Activated naive CD4-positive, alpha-beta T cell treated with anti-CD3 and anti-CD28 coated beads for 36 hours (primary cell): ENCODE measurements at regions of chr16 and their contacts with region 1.

Region 1: GRCh38 chr16:23826528-23827045 is 9.2 kb upstream of the PRKCB start:
- DNase-seq: no peak
- H3K4me3 Mint-ChIP-seq: peak overlapping the region; percentile 17
- H3K27ac Mint-ChIP-seq: peak overlapping the region; percentile 70
- H3K4me1 Mint-ChIP-seq: peaks cover 21% of the 10 kb centered on the region
- H3K27me3 Mint-ChIP-seq: no peaks in the 10 kb centered on the region

Region 2: DNA sequence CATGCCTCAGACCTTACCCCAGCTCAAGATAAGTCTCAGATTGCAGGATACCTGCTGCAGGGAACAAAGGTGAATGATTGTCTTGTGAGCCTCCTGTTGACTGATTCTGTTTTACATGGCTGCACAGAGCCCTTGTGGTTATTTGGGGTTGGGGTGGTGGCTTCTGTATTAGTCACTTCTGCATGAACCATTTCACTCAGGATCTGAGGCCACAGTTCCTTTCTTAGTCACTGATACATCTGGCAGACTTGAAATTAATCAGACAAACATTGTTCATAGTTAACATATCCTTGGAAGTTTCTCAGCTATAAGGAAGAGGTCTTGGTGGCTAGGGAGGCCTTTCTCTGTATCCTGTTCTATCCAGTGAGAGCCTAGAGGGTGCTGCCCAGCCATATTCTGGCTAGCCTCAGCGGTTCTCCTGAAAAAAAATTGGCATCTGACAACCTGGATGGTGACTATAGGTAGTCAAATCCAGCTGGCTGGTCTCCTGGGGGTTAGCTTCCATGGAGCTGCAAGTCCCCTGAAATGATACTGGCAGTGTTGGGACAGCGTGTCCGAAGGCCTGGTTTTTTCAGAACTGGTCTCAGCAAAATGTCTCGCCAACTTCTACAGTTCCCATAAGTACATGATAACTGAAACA is 156.3 kb before region 1 on chr16:
- CTCF ChIA-PET with region 1: no interaction called
- intact Hi-C with region 1: loop called (anchors 1 kb)
- DNase-seq: peak; percentile 82
- H3K4me3 Mint-ChIP-seq: no peak overlapping the region
- H3K27ac Mint-ChIP-seq: peak overlapping the region; percentile 13
- H3K4me1 Mint-ChIP-seq: peaks cover 16% of the 10 kb centered on the region
- H3K27me3 Mint-ChIP-seq: no peaks in the 10 kb centered on the region

Region 3: DNA sequence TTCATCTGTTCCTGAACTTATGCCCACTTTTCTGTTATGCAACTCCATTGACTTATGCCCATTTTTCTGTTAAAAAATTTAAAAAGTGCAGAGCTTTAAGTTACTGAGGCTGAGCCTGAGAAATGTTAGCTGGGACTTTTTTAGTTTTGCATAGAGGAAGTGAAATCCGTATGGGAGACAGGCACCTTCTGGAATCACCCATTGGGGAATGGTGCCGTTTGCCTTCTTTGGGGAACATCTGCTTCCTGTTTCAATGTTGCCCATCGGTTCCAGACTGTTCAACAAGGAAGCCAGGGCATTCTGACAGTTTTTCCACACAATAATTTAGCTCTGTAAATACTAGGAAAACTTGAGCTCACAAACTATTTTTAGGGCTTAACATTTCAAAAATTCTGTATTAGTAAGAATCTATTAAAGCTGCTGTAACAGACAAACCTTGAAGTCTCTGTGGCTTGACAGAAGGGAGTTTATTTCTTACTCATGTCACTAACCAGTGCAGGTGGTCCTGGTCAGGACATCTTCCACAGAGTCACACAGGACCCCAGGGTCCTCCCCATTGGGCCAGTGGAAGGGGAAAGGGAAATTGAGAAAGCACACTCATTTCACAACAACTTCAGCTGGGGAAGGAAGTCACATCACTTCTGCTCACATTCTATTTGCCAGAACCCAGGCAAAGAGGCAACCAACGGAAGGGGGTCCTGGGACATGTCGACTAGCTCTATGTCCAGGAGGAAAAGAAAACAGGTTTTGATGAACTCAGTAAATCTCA is 26.4 kb after region 1 on chr16:
- CTCF ChIA-PET with region 1: no interaction called
- intact Hi-C with region 1: loop called (anchors 1 kb)
- DNase-seq: peak; percentile 30
- H3K4me3 Mint-ChIP-seq: no peak overlapping the region
- H3K27ac Mint-ChIP-seq: peak overlapping the region; percentile 38
- H3K4me1 Mint-ChIP-seq: peaks cover 85% of the 10 kb centered on the region
- H3K27me3 Mint-ChIP-seq: no peaks in the 10 kb centered on the region

Region 4: GRCh38 chr16:23877107-23878090 is 50.8 kb after region 1 on chr16:
- CTCF ChIA-PET with region 1: interaction called, 4 read pairs
- intact Hi-C with region 1: loop called (anchors 1 kb)
- DNase-seq: peak; percentile 52
- H3K4me3 Mint-ChIP-seq: no peak overlapping the region
- H3K27ac Mint-ChIP-seq: peak overlapping the region; percentile 55
- H3K4me1 Mint-ChIP-seq: peaks cover 69% of the 10 kb centered on the region
- H3K27me3 Mint-ChIP-seq: no peaks in the 10 kb centered on the region

Region 5: GRCh38 chr16:24139282-24139681 is 312.7 kb after region 1 on chr16:
- CTCF ChIA-PET with region 1: no interaction called
- intact Hi-C with region 1: loop called (anchors 5 kb)
- DNase-seq: peak; percentile 54
- H3K4me3 Mint-ChIP-seq: no peak overlapping the region
- H3K27ac Mint-ChIP-seq: no peak overlapping the region
- H3K4me1 Mint-ChIP-seq: peaks cover 21% of the 10 kb centered on the region
- H3K27me3 Mint-ChIP-seq: no peaks in the 10 kb centered on the region

Region 6: DNA sequence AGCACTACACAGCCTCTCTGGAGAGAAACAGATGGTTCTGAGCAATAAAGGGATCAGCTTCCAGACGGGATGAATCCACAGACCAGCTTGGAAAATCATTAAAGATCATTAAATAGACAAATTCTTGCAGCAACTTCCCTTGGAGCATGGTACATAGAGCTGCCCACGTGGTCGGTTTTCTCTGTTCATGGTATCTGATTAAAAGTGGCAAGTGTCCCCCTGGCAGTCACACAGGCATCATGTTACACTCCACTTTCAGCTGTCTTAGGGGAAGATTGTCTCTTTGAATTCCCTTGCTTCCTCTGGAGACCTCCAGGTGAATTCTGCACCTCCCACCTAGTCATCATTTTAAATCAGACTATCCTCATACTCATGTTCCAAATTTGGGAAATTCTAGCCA is 337.3 kb after region 1 on chr16:
- CTCF ChIA-PET with region 1: no interaction called
- intact Hi-C with region 1: no loop called
- DNase-seq: no peak
- H3K4me3 Mint-ChIP-seq: no peak overlapping the region
- H3K27ac Mint-ChIP-seq: no peak overlapping the region
- H3K4me1 Mint-ChIP-seq: no peaks in the 10 kb centered on the region
- H3K27me3 Mint-ChIP-seq: no peaks in the 10 kb centered on the region